ENCODE measurements at regions of chr7 and their contacts with region 1.

Region 1: GRCh38 chr7:137943147-137943551 is 58.7 kb downstream of the CREB3L2 start:
- DNase-seq: peak in 1 of 2 donors; percentile 39
- ATAC-seq: peak; percentile 46 to 83 (median 73)
- H3K4me3 ChIP-seq: no peak overlapping the region
- H3K27ac ChIP-seq: peak overlapping the region; percentile 51
- H3K4me1 ChIP-seq: peaks cover 22% of the 10 kb centered on the region
- H3K27me3 ChIP-seq: no peaks in the 10 kb centered on the region
- CTCF ChIP-seq: no peak

Region 2: GRCh38 chr7:137985253-137985896 is 42.2 kb after region 1 on chr7:
- intact Hi-C with region 1: loop called in 1 of 2 experiments (anchors 5 kb)
- DNase-seq: no peak
- ATAC-seq: peak in 1 of 4 donors; percentile 33
- H3K4me3 ChIP-seq: no peak overlapping the region
- H3K27ac ChIP-seq: no peak overlapping the region
- H3K4me1 ChIP-seq: peaks cover 49% of the 10 kb centered on the region
- H3K27me3 ChIP-seq: no peaks in the 10 kb centered on the region
- CTCF ChIP-seq: no peak

Region 3: DNA sequence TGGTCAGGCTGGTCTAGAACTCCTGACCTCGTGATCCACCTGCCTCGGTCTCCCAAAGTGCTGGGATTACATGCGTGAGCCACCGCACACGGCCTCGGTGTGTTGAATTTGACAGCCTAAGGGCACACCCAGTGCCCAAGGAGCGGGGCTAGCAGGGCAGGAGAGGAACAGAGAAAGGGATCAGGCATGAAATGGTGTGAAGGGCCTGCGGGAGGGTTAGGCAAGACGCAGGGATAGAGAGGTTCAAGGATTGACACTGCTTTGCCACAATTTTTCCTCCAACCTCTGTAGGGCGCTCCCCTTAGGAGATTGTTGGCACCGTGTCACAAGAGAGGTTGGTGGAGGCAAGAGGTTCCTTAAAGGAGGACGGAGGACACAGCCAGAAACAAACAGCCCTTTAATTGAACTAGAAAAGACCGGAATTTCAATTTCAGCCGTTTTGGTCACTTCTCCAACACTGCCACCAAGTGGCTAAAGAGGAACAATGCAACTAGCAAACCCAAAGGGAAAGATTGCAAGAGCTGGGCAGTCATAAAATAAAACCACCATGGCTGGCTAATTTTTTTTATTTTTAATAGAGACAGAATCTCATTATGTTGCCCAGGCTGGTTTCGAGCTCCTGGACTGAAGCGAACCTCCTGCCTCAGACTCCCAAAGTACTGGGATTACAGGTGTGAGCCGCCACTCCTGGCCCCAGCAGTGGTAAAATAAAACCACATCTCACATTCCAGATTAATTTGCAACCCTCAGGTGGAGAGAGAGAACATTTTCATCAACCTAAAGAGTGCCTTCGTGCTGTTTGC is 65.6 kb after region 1 on chr7:
- intact Hi-C with region 1: no loop called
- DNase-seq: no peak
- ATAC-seq: peak; percentile 54 to 85 (median 66)
- H3K4me3 ChIP-seq: no peak overlapping the region
- H3K27ac ChIP-seq: no peak overlapping the region
- H3K4me1 ChIP-seq: no peaks in the 10 kb centered on the region
- H3K27me3 ChIP-seq: no peaks in the 10 kb centered on the region
- CTCF ChIP-seq: peak; percentile 96

Measured in psoas muscle (tissue), 8 donors.